ENCODE measurements at regions of chr7 and their contacts with region 1.

Region 1: DNA sequence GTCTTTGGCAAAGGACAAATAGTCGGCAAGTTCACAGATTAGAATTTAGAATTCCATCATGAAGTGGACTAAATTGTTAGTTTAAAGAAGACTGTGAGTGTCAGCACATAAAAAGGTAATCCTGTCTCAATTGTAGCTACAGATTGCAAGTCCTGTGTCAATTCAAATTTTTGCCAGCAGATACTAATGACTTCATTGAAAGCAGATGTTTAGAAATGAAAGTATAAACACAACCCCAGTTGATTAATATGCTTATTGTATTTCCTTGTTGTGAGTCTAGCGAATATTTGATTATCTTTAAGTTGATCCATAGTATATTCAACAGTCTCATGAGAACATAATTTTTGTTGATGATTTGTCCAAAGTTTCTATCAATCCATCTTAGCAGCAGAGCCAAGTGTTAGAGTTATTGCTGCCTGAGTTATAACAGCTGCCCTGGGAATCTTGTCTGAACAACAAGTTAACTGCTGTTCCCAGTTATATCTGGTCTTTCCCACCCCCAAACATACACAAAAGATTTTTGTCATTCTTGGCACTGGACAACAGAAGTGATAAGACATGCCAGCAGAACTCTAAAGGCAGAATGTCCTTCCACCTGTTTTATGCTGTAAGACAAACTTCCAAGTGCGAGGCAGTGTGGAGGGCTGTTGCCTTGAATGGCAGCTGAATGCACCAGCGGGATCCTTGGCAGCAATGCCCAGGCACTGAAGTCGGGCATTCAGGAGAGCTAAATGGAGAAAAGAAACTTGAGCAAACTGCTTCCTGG is 21.3 kb upstream of the HERPUD2 start:
- DNase-seq: no peak
- H3K4me3 ChIP-seq: no peak overlapping the region
- H3K27ac ChIP-seq: peak overlapping the region; percentile 26 to 66 (median 54)
- H3K4me1 ChIP-seq: peaks cover 0 to 18% (median 5%) of the 10 kb centered on the region in 4 donors
- H3K27me3 ChIP-seq: no peaks in the 10 kb centered on the region
- CTCF ChIP-seq: no peak
- EP300 ChIP-seq: no peak
- POLR2A ChIP-seq: no peak

Region 2: GRCh38 chr7:35738889-35739288 is 22.7 kb after region 1 on chr7:
- in situ Hi-C with region 1: no loop called
- intact Hi-C with region 1: no loop called
- DNase-seq: no peak
- H3K4me3 ChIP-seq: no peak overlapping the region
- H3K27ac ChIP-seq: no peak overlapping the region
- H3K4me1 ChIP-seq: peaks cover 0 to 4% (median 0%) of the 10 kb centered on the region in 4 donors
- H3K27me3 ChIP-seq: no peaks in the 10 kb centered on the region
- CTCF ChIP-seq: no peak
- EP300 ChIP-seq: no peak
- POLR2A ChIP-seq: no peak

Region 3: DNA sequence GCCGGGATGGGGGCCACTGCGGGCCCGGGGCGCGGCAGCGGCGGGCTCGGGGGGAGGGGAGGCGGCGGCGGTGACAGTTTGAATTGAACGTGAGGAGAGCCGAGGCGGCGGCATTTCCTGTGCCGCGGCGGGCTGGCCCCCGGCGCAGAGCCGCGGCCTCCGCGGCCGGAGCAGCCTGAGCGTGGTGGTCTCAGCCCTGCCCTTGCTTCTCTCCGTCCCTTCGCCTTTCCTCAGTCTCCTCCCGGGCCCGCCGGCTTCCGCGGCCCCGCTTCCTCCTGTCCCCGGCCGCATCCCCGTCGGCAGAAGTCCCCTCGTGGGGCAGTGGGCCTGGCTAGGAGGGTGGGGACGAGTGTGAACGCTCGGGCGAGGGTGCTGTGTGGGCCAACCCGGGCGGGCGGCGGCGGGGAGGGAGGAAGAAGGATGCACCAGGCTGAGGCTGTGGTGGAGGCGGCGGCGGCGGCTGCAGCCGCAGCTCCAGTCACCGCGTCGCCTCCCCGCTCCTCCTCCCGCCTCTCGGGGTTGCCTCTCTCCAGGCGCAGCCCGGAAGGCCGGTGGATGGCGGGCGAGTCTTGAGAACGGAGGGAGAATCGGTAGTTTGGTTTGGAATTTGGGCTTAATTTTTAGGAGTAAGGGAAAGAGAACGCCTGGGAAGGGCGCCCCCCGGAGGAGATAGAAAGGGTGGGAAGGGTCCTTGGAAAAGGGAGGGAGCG is 85.3 kb after region 1 on chr7:
- in situ Hi-C with region 1: loop called in 1 of 4 experiments (anchors 25 kb)
- intact Hi-C with region 1: loop called (anchors 5 kb)
- DNase-seq: peak; percentile 76
- H3K4me3 ChIP-seq: peak overlapping the region; percentile 82 to 98 (median 88)
- H3K27ac ChIP-seq: peak overlapping the region; percentile 98 to 100 (median 98)
- H3K4me1 ChIP-seq: peaks cover 12 to 50% (median 34%) of the 10 kb centered on the region in 4 donors
- H3K27me3 ChIP-seq: no peaks in the 10 kb centered on the region
- CTCF ChIP-seq: peak in 4 of 5 experiments; percentile 42 to 58 (median 48)
- EP300 ChIP-seq: no peak
- POLR2A ChIP-seq: no peak

Region 4: GRCh38 chr7:35875292-35875691 is 159.1 kb after region 1 on chr7:
- in situ Hi-C with region 1: loop called in 1 of 4 experiments (anchors 25 kb)
- intact Hi-C with region 1: no loop called
- DNase-seq: no peak
- H3K4me3 ChIP-seq: no peak overlapping the region
- H3K27ac ChIP-seq: no peak overlapping the region
- H3K4me1 ChIP-seq: peaks cover 0 to 25% (median 14%) of the 10 kb centered on the region in 4 donors
- H3K27me3 ChIP-seq: no peaks in the 10 kb centered on the region
- CTCF ChIP-seq: no peak
- EP300 ChIP-seq: no peak
- POLR2A ChIP-seq: no peak

Region 5: GRCh38 chr7:35906191-35906908 is 190.1 kb after region 1 on chr7:
- in situ Hi-C with region 1: loop called in 1 of 4 experiments (anchors 5 kb)
- intact Hi-C with region 1: no loop called
- DNase-seq: peak; percentile 57
- H3K4me3 ChIP-seq: no peak overlapping the region
- H3K27ac ChIP-seq: no peak overlapping the region
- H3K4me1 ChIP-seq: no peaks in the 10 kb centered on the region
- H3K27me3 ChIP-seq: no peaks in the 10 kb centered on the region
- CTCF ChIP-seq: peak; percentile 91 to 96 (median 92)
- EP300 ChIP-seq: no peak
- POLR2A ChIP-seq: no peak

Region 6: DNA sequence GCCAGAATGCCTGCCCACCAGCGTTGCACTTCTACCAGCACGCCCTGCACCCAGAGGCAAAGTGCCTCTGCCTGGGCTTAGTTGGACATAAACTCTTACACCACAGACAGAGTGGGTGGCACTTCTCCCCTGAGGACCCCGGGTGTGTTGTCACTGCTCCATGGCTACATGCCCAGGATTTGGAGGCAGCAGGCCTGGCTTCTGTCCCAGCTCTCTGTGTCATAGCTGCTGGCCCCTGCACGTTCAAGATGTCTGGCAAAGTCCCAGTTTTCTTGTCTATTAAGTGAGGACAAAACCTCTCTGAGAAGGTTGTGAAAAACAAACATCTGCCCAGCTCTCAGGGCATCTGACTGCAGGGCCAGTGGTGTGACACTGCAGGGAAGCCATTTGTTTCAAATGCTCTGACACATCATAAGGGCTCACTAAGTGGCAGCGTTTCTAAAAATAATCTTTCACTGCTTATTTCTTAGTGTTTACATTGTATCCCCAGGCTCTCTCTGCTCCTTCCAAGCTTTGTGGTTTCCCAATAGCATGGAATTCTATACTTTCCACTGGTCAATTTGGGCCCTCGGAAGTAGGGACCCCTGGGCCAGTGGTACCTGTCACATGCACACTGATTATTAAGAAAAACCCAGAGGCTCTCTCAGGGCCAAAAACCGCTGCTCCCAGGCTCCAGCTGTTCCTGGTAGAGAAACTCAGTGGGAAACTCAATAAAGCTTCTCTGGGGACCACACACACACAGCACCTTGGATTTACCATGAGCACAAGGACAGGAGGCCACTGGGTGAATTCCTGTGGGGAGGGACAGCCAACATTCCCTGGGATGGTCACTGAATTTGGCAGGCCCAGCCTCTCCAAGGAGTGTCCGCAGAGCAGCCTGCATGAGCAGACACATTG is 587.2 kb after region 1 on chr7:
- in situ Hi-C with region 1: loop called in 1 of 4 experiments (anchors 25 kb)
- intact Hi-C with region 1: no loop called
- DNase-seq: peak; percentile 54
- H3K4me3 ChIP-seq: no peak overlapping the region
- H3K27ac ChIP-seq: peak overlapping the region; percentile 41 to 64 (median 49)
- H3K4me1 ChIP-seq: peaks cover 5 to 21% (median 12%) of the 10 kb centered on the region in 4 donors
- H3K27me3 ChIP-seq: no peaks in the 10 kb centered on the region
- CTCF ChIP-seq: no peak
- EP300 ChIP-seq: no peak
- POLR2A ChIP-seq: no peak

Region 7: DNA sequence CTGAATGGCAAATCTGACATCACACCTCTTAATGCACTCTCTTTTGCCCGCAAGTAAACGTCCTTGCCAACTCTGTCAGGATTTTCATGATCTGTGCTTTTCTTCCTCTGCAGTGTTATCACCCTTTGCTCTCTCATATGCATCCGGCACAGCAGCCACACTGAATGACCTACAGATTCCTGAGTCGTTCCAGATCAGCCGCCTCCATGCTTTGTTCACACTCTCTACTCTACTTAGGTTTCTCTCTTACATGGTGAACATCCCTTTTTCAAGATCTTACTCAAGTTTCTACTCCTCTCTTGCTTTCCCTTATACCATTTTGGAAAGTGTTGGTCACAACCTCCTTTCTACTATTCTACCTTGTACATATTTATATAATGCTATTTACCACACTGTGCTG is 1135.8 kb after region 1 on chr7:
- in situ Hi-C with region 1: no loop called
- intact Hi-C with region 1: no loop called
- DNase-seq: no peak
- H3K4me3 ChIP-seq: no peak overlapping the region
- H3K27ac ChIP-seq: no peak overlapping the region
- H3K4me1 ChIP-seq: no peaks in the 10 kb centered on the region
- H3K27me3 ChIP-seq: no peaks in the 10 kb centered on the region
- CTCF ChIP-seq: no peak
- EP300 ChIP-seq: no peak
- POLR2A ChIP-seq: no peak

Measured in transverse colon (tissue), 4 donors.